AG04449 (cell line): ENCODE measurements at regions of chr3 and their contacts with region 1.

Region 1: DNA sequence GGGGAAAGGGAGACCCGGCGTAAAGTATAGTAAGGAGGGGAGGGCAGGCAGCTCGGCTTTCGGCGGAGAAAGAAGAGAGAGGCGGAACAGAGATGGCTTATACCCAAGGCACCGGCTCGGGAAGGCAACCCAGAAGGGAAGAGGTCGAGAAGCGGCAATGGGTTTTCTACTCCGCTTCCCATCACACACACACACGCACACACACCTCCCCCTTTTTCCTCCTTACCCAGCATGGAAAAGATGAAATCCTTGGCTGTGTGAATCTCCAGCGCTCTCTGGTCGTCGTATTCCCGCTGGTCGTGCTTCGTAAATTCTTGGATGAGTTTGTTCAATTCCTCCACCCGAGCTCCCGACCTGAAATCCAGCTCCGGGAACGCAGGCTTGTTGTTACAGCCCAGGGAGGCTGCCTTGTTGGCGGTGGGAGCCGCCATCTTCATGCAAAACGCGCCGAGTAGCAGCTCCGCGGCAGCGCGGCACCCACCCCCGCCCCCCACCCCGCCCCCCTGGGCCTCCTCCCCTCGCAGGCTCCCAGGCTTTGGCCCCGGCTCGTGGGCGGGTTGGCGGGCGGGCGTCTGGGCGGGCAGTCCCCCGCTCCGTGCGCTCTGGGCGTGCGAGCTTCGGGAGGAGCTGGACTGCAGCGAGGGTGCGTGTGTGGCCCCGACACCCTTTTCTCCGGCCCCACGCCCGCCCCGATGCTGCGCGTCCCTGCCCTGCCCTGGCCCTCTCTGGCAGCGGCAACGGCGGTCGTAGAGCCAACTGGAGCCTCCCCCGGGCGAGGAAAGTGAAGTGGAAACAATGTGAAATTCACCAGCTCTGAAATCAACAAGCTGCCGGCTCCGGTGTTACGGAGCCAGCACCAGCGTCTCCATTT is at the start of gene MB21D2:
- DNase-seq: no peak
- H3K4me3 ChIP-seq: peak within 1 kb of the TSS; percentile 97
- CTCF ChIP-seq: no peak

Region 2: GRCh38 chr3:192825657-192826200 is 91.9 kb before region 1 on chr3:
- CTCF ChIA-PET with region 1: interaction called, 11 read pairs
- POLR2A ChIA-PET with region 1: no interaction called
- DNase-seq: no peak
- H3K4me3 ChIP-seq: no peak overlapping the region
- CTCF ChIP-seq: no peak